PC-3 (cell line): ENCODE measurements at regions of chr19 and their contacts with region 1.

Region 1: DNA sequence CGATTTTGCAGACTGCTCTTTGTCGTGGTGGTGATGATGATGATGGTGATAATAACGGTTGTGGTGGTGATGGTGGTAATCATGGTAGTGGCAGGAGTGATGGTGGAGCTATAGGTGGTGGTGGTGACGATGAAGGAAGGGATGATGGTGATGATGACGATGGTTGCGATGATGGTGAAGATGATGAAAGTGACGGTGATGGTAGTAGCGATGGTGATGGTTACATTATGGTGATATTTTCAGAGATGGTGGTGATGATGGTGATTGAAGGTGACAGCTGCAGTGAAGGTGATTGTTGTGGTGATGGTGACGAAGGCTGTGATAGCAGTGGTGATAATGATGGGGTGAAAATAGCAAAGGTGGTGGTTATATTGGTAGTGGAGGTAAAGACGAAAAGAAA is 2.1 kb upstream of the ADGRE3 start:
- DNase-seq: no peak
- ATAC-seq: no peak
- H3K4me3 ChIP-seq: no peak overlapping the region
- H3K27ac ChIP-seq: no peak overlapping the region
- H3K4me1 ChIP-seq: no peaks in the 10 kb centered on the region
- H3K27me3 ChIP-seq: peaks cover 48% of the 10 kb centered on the region
- CTCF ChIP-seq: no peak

Region 2: GRCh38 chr19:14477418-14478112 is 199.2 kb before region 1 on chr19:
- CTCF ChIA-PET with region 1: no interaction called
- POLR2A ChIA-PET with region 1: interaction called, 17 read pairs
- intact Hi-C with region 1: no loop called
- DNase-seq: no peak
- ATAC-seq: no peak
- H3K4me3 ChIP-seq: no peak overlapping the region
- H3K27ac ChIP-seq: peak overlapping the region; percentile 27; the same call in 1 of the 2 replicates
- H3K4me1 ChIP-seq: peaks cover 27% of the 10 kb centered on the region
- H3K27me3 ChIP-seq: no peaks in the 10 kb centered on the region
- CTCF ChIP-seq: no peak